Activated B cell treated with CpG ODN at 0.5 μM for 24 hours (primary cell): ENCODE measurements at regions of chr10 and their contacts with region 1.

Region 1: GRCh38 chr10:133079836-133080682 is 7.7 kb upstream of the ADGRA1 start:
- DNase-seq: no peak
- ATAC-seq: no peak
- H3K4me3 Mint-ChIP-seq: no peak overlapping the region
- H3K27ac Mint-ChIP-seq: no peak overlapping the region
- H3K4me1 Mint-ChIP-seq: no peaks in the 10 kb centered on the region
- H3K27me3 Mint-ChIP-seq: peaks cover 8% of the 10 kb centered on the region
- CTCF ChIP-seq: no peak

Region 2: DNA sequence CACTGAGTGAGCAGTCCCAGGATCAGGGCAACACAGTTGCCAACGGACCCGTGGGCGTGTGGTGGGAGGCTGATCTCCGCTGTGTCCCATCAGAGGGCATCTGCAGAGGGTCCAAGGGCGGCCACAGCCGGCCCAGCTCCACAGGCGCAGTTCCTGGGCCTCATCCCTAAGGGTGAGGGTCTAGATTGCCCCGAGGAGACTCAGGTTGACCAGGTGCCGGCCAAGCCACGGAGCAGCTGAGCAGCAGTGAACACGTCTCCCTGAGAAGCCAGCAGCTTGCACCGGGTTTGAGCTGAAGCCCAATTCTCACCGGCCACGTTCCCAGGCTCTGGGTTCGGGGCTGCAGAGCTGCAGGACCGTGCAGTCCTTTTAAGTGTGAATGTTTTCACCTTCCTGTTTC is 51.1 kb before region 1 on chr10:
- CTCF ChIA-PET with region 1: interaction called, 4 read pairs
- POLR2A ChIA-PET with region 1: interaction called, 11 read pairs
- intact Hi-C with region 1: no loop called
- DNase-seq: no peak
- ATAC-seq: no peak
- H3K4me3 Mint-ChIP-seq: no peak overlapping the region
- H3K27ac Mint-ChIP-seq: no peak overlapping the region
- H3K4me1 Mint-ChIP-seq: no peaks in the 10 kb centered on the region
- H3K27me3 Mint-ChIP-seq: peaks cover 5% of the 10 kb centered on the region
- CTCF ChIP-seq: no peak

Region 3: GRCh38 chr10:133096616-133097269 is 16.7 kb after region 1 on chr10:
- CTCF ChIA-PET with region 1: no interaction called
- POLR2A ChIA-PET with region 1: no interaction called
- intact Hi-C with region 1: no loop called
- DNase-seq: no peak
- ATAC-seq: no peak
- H3K4me3 Mint-ChIP-seq: no peak overlapping the region
- H3K27ac Mint-ChIP-seq: no peak overlapping the region
- H3K4me1 Mint-ChIP-seq: no peaks in the 10 kb centered on the region
- H3K27me3 Mint-ChIP-seq: peaks cover 3% of the 10 kb centered on the region
- CTCF ChIP-seq: no peak

Region 4: GRCh38 chr10:133139551-133140065 is 59.5 kb after region 1 on chr10:
- CTCF ChIA-PET with region 1: no interaction called
- POLR2A ChIA-PET with region 1: no interaction called
- intact Hi-C with region 1: no loop called
- DNase-seq: no peak
- ATAC-seq: no peak
- H3K4me3 Mint-ChIP-seq: no peak overlapping the region
- H3K27ac Mint-ChIP-seq: no peak overlapping the region
- H3K4me1 Mint-ChIP-seq: peaks cover 13% of the 10 kb centered on the region
- H3K27me3 Mint-ChIP-seq: peaks cover 6% of the 10 kb centered on the region
- CTCF ChIP-seq: no peak

Region 5: DNA sequence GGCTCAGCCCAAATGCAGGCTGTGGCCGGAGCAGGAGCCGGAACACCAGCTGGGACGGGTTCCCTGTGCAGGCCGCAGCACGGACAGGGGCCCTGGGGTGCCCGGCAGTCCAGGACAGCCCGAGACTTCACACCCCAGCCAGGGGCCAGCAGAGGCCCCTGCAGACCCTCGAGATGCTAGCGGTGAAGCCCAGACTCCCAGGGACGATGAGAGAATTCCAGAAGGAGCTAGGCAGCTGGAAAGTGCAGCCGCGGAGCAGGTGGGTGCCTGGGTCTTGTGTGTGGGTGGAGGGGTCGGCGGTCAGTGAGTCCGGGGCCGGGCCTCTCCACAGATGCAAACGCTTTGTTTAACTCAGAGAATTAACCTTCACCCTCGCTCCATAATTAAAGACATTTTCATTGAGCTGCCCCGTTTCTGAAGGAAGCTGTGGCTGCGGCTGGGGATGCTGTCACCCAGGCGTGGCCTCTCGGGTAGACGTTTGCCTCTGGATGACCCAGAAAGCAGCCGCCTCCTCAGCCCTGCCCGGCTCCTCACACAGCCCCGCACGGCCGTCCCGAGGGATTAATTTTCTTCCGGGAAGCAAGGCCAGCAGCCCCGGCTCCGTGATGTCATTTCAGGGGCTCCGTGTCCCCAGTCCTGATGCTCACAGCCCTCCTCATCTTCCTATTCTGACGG is 106.5 kb after region 1 on chr10:
- CTCF ChIA-PET with region 1: no interaction called
- POLR2A ChIA-PET with region 1: no interaction called
- intact Hi-C with region 1: no loop called
- DNase-seq: no peak
- ATAC-seq: no peak
- H3K4me3 Mint-ChIP-seq: no peak overlapping the region
- H3K27ac Mint-ChIP-seq: no peak overlapping the region
- H3K4me1 Mint-ChIP-seq: no peaks in the 10 kb centered on the region
- H3K27me3 Mint-ChIP-seq: peaks cover 2% of the 10 kb centered on the region
- CTCF ChIP-seq: no peak